Calu3 (cell line): ENCODE measurements at regions of chr15 and their contacts with region 1.

Region 1: GRCh38 chr15:62857411-62857853 is 185.1 kb upstream of the TPM1 start:
- DNase-seq: peak; percentile 63
- H3K4me3 Mint-ChIP-seq: peak overlapping the region; percentile 9
- H3K27ac Mint-ChIP-seq: peak overlapping the region; percentile 88
- H3K4me1 Mint-ChIP-seq: peaks cover 58% of the 10 kb centered on the region
- H3K27me3 Mint-ChIP-seq: no peaks in the 10 kb centered on the region
- CTCF ChIP-seq: no peak

Region 2: GRCh38 chr15:62912808-62913207 is 55.4 kb after region 1 on chr15:
- CTCF ChIA-PET with region 1: no interaction called
- intact Hi-C with region 1: no loop called
- DNase-seq: no peak
- H3K4me3 Mint-ChIP-seq: no peak overlapping the region
- H3K27ac Mint-ChIP-seq: no peak overlapping the region
- H3K4me1 Mint-ChIP-seq: peaks cover 12% of the 10 kb centered on the region
- H3K27me3 Mint-ChIP-seq: no peaks in the 10 kb centered on the region
- CTCF ChIP-seq: no peak

Region 3: DNA sequence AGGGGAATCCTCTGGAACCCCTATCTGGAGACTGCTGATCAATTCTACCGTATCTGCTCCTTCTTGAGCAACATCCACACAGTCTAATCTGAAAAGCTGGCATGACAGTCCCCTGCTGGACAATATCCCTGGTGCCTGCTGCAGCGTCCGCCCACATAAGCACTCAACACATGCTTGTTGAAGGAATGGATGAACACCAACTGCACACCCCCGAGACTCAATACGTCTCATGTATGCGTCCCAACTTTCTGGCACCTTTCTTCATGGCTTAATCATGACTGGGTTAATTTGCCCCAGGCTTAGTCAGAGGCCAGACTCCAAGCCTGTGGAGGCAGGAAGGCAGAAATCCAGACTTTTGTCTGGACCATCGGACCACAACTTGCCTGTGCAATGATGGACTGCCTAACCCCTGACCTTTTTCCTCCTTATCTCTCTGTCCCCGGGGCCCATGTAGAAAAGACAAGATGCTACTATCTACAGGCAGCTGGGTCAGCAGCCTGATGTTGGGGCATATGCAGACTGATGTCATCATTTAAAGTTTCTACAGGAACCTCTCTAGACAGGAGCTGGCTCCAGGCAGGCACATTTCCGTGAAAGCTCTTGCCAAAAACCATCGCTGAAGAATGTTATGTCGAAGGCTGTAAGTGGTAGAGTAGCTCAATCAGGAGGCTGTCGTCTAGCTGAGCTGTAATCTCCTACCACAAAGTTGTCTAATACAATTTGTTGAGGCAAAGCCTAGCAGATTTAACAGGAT is 71.0 kb after region 1 on chr15:
- CTCF ChIA-PET with region 1: no interaction called
- intact Hi-C with region 1: loop called (anchors 2 kb)
- DNase-seq: peak; percentile 70
- H3K4me3 Mint-ChIP-seq: peak overlapping the region; percentile 7
- H3K27ac Mint-ChIP-seq: peak overlapping the region; percentile 86
- H3K4me1 Mint-ChIP-seq: peaks cover 36% of the 10 kb centered on the region
- H3K27me3 Mint-ChIP-seq: no peaks in the 10 kb centered on the region
- CTCF ChIP-seq: peak; percentile 45